ENCODE measurements at regions of chr1 and their contacts with region 1.

Region 1: DNA sequence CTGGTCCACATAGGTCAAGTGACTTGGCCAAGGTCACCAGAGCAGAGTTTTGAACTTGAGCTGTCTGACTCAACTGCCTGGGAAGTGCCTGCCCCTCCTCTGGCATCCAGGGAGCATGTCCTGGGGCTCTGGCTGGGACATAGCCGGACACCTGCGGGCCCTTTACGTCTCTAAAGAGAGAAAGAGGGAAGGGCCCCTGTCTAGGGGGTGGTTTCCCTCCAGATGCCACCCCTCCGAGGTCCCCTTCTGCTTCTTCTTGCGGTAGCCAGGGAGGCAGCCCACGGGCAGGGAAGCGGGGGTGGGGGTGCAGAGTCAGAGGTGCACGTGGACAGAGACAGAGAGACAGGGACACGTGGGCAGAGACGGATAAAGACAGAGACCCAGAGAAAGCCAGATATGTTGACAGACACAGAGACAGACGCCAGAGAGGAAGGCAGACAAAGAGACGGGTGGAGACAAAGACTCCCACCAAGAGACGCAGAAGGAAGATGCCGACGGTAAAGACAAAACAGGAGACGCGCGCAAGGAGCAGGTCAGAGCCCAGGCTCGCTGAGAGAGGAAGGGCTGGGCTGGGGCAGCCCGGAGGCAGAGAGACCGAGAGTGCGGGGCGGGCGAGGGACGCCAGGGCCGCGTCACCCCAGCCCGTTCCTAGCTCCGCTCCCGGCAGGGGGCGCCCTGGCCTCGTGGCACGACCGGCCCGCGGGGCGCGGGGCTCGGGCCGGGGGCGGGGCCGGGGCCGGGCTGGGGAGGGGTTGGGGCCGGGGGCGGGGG is 458 bp upstream of the ALPL start:
- DNase-seq: peak; percentile 41
- H3K4me3 Mint-ChIP-seq: peak overlapping the region; percentile 57
- H3K27ac Mint-ChIP-seq: no peak overlapping the region
- H3K4me1 Mint-ChIP-seq: peaks cover 5% of the 10 kb centered on the region
- H3K27me3 Mint-ChIP-seq: peaks cover 48% of the 10 kb centered on the region

Region 2: DNA sequence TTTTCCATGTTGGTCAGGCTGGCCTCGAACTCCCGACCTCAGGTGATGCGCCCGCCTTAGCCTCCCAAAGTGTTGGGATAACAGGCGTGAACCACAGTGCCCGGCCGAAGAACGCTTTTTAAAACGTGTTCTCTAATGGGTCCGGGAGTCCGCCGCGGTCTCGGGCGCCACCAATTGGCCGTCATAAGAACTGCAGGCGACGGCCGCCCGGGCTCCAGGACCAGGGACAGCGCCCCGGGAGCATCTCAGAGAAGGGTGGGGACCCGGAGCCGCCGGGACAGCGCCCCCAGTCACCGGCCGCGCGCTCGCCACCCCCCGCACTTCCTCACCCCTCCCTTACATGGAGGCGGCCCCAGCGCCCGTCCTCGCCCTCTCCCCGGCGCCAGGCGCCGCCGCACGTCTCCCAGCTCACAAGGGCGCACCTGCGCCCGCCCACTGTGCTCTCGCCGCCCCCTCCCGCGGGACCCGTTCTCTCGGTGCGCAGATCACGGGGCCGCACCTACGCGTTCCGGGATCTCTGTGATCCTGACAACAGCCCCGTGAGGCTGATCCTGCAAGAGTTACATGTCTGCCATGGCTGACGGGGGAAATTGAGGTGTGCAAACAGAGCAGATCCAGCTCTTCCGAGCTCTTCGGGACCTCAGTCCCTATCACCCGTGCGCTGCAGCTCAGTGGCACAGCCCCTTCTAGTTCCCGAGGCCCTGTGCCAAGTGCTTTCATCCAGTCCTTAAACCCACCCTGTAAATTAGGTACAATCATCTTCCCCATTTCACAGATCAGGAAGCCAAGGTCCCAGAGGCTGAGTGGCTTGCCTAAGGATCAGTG is 150.5 kb after region 1 on chr1:
- intact Hi-C with region 1: loop called (anchors 2 kb)
- DNase-seq: peak; percentile 80
- H3K4me3 Mint-ChIP-seq: peak overlapping the region; percentile 56
- H3K27ac Mint-ChIP-seq: no peak overlapping the region
- H3K4me1 Mint-ChIP-seq: peaks cover 6% of the 10 kb centered on the region
- H3K27me3 Mint-ChIP-seq: peaks cover 29% of the 10 kb centered on the region